Left cardiac atrium (tissue), 4 donors: ENCODE measurements at regions of chr2 and their contacts with region 1.

Region 1: DNA sequence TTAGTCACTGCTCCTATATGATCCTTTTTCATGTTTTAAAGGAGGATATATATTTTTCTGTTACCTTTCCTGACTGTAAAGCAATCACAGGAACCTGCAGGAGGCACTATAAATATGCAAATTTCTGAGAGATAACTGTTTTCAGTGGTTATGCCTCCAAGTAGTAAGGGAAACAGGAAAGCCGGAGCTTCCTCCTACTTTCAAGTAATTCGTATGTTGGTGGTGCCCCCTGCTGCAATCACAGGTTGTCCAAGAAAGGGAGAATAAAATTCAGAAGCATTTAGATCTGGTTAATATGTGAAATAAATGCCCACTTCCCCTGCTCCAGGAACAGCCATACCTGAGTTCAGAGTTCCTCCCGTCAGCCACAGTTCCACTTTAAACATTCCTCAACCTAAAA is 12.0 kb upstream of the BCL11A start:
- DNase-seq: no peak
- ATAC-seq: no peak

Region 2: DNA sequence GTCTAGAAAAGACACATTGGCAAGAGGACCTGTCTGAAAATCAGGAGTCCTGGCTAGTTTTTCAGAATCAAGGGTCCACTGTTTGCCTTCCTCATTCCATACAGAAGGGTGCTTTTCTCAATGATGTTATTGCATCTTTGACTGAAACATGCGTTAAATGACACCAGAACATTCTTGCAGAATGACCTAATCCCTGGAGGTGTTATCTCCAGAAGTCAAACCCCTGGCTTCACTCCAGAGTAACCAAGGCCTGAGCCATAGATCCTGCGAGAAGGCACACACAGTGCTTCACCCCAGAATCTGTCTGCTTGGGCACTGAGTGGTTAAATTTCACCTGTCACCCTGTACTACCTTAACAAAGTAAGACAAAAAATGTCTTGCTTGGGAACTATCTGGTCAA is 1269.2 kb before region 1 on chr2:
- intact Hi-C with region 1: loop called (anchors 5 to 10 kb)
- DNase-seq: no peak
- ATAC-seq: no peak